Right cardiac atrium (tissue), 5 donors: ENCODE measurements at regions of chr16 and their contacts with region 1.

Region 1: DNA sequence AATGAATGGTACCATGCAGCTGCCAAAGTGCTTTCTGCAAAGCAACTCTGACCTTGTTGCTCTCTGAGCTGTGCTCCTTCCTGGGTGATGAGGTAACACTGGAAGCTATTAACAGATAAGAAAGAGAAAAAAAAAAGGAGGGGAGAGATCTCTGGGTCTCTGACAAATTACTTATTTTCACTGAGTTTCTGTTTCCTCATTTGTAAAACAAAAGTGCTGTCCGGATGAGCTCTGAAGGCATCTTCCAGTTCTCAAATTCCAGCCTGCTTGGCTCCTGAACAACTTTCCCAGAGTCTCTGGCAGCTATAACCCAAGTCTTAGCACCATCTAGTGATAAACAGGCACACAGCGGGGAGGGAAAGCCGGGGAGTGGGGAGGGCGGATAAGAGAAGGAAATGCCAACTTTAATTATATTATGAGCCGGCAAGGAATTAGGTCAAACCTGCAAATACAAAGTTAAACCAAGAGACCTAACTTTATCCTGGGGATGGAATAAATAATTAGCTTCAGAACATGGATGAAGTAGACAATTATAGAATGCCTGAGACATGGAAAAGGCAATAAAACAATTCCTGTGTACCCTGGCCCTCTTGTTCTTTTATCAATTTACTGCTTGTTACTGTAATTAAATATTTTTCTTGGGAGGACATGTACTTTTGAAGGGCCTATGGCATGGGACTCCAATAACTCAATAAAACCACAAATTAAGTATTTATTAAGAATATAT is 61.3 kb upstream of the KIFC3 start:
- DNase-seq: peak; percentile 72 to 80 (median 75)
- ATAC-seq: peak; percentile 92 to 93
- H3K4me3 ChIP-seq: no peak overlapping the region
- H3K27ac ChIP-seq: no peak overlapping the region
- H3K4me1 ChIP-seq: no peaks in the 10 kb centered on the region
- H3K27me3 ChIP-seq: no peaks in the 10 kb centered on the region

Region 2: GRCh38 chr16:57639172-57639887 is 224.3 kb before region 1 on chr16:
- intact Hi-C with region 1: no loop called
- DNase-seq: peak in 2 of 3 donors; percentile 75 to 78
- ATAC-seq: peak in 1 of 2 donors; percentile 8
- H3K4me3 ChIP-seq: no peak overlapping the region
- H3K27ac ChIP-seq: peak overlapping the region; percentile 35
- H3K4me1 ChIP-seq: peaks cover 22% of the 10 kb centered on the region
- H3K27me3 ChIP-seq: no peaks in the 10 kb centered on the region

Region 3: DNA sequence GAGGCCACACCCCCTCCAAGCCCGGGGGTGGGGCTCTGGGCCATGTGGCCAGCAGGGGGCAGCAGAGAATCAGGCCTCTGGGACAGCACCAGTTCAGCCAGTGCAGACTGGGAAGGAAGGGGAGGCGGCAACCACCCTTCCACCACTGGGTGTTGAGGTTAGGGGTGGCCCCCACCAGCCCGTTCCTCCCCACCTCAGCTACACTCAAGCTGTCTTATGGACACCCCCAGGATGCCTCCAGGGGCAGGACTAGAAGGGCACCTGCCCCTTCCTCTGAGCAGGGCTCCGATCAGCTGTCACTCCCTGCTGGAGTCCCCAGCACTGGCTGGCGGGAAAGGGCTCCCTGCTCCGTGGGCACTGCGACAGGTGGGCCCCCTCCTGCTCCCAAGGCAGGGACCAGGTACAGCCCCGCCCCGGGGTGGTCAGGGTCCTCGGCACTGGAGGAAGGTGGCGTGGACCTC is 106.2 kb before region 1 on chr16:
- intact Hi-C with region 1: loop called (anchors 2 kb)
- DNase-seq: peak; percentile 90 to 95 (median 95)
- ATAC-seq: peak; percentile 83 to 86
- H3K4me3 ChIP-seq: no peak overlapping the region
- H3K27ac ChIP-seq: no peak overlapping the region
- H3K4me1 ChIP-seq: no peaks in the 10 kb centered on the region
- H3K27me3 ChIP-seq: no peaks in the 10 kb centered on the region

Region 4: DNA sequence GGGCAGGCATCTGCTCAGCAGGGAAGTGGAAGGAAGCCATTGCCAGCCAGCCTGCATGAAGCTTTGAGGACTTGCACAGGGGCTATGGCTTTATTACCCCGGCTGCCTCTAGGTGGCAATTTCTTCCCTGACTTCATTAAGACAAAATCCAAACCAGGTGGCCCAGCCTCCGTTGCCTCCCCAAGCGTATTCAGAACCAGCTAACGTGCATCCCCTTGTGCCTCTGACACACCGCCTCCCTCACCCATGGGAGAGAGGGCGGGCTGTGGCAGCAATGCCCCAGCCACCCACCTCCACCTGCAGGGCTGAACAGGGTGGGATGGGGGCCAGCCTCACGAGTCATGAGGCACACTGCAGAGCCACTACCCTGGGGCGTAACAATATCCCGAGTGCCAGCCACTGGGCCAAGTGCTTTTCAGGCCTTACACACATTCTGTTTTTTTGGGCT is 68.1 kb before region 1 on chr16:
- intact Hi-C with region 1: loop called in 3 of 4 experiments (anchors 5 to 10 kb)
- DNase-seq: peak in 1 of 3 donors; percentile 68
- ATAC-seq: no peak
- H3K4me3 ChIP-seq: no peak overlapping the region
- H3K27ac ChIP-seq: no peak overlapping the region
- H3K4me1 ChIP-seq: peaks cover 20% of the 10 kb centered on the region
- H3K27me3 ChIP-seq: no peaks in the 10 kb centered on the region

Region 5: DNA sequence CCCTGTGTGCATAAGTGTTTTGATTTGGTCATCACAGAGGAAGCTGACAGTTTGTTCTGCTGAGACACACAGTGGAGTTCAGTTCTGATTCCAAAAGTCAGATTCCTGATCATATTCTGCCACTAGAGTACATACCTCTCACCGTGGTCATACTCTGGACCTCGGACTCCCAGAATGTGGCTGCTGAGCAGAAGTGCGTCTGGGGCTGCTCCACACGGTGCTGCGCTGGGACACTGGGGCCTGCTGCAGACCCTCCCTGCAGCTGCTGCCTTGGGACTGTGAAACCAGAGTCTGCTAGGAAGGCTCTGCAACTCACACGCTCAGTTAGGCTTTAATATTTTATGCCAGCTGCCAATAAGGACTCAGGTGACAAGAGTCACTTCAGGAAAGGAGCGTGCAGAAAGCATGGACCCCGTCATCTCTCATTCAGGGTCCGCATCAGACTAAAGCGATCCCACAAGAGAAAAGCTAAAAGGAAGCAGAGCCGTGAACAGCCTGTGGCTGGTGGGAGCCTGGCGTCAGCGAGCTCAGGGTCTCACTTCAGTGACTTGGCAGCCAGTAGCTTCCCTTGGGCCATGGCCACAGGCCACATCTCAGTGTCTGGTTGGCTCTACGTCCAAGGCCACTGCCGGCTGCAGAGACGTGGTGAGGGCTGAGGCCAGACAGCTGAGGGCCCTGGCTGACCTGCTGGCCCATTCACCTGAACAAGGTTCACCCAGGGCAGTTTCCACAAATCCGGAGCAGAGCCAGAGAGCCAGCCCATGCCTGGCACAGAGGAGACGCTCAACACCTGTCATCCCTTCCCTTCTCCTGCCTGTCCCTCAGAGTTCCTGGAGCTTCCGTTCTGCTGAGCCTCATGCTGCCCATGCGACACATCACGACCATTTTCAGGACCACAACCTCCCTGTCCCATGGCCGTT is 36.6 kb before region 1 on chr16:
- intact Hi-C with region 1: no loop called
- DNase-seq: peak in 2 of 3 donors; percentile 71
- ATAC-seq: peak; percentile 8 to 32
- H3K4me3 ChIP-seq: no peak overlapping the region
- H3K27ac ChIP-seq: no peak overlapping the region
- H3K4me1 ChIP-seq: peaks cover 3% of the 10 kb centered on the region
- H3K27me3 ChIP-seq: no peaks in the 10 kb centered on the region